ENCODE measurements at regions of chr6 and their contacts with region 1.

Region 1: GRCh38 chr6:104940881-104941728 is 15.8 kb upstream of the LIN28B start:
- DNase-seq: peak; percentile 33
- H3K4me3 ChIP-seq: peak overlapping the region; percentile 25 to 42 (median 38)
- H3K27ac ChIP-seq: no peak overlapping the region
- H3K4me1 ChIP-seq: peaks cover 4% of the 10 kb centered on the region
- H3K27me3 ChIP-seq: peaks cover 12 to 54% of the 10 kb centered on the region in 2 experiments
- CTCF ChIP-seq: peak; percentile 66 to 74
- POLR2A ChIP-seq: no peak

Region 2: DNA sequence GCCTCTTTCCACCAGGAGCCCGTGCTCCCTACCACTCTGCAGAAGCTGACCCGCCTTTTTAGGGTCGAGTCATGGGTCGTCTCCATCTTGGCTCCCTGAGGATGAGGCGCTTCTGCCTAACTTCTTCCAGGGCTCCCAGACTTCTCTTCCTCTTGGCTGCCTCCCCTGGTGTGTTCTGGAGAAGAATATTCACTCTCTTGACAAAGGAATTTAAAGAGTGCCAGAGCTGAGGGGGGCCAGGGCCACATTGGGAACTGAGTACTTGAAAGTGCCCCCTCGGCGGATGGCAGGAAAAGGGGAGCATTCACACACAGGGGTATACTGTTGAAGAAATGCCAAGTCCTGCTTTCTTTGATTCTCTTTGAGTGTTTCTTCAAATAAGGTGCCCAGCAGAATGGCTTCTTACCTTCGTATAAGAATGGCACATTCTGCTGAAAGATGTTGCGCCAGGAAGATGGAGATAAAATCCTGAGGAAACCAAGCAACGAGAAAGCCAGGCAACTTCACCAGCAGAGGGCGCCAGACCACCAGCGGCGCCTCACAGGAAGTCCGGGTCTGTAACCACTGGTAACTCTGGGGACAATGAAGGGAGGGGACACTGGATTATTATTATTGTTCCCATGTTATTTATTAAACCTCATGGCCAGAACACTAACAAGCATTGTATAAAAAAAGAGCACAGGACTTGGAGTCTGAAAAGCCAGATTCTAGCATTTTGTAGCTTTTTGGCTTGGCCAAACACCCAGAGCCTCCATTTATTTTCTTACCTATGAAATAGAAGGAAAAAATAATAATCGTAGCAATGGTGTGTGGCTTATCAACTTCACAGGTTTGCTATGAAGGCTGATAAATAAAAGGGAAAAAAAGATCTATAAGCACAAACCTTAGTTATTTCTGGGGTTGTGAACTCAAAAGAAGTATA is 258.1 kb before region 1 on chr6:
- CTCF ChIA-PET with region 1: no interaction called
- POLR2A ChIA-PET with region 1: no interaction called
- dilution Hi-C with region 1: no loop called
- intact Hi-C with region 1: loop called (anchors 2 kb)
- DNase-seq: peak; percentile 56
- H3K4me3 ChIP-seq: no peak overlapping the region
- H3K27ac ChIP-seq: peak overlapping the region; percentile 17
- H3K4me1 ChIP-seq: no peaks in the 10 kb centered on the region
- H3K27me3 ChIP-seq: no peaks in the 10 kb centered on the region
- CTCF ChIP-seq: peak; percentile 78 to 86
- POLR2A ChIP-seq: no peak

Region 3: DNA sequence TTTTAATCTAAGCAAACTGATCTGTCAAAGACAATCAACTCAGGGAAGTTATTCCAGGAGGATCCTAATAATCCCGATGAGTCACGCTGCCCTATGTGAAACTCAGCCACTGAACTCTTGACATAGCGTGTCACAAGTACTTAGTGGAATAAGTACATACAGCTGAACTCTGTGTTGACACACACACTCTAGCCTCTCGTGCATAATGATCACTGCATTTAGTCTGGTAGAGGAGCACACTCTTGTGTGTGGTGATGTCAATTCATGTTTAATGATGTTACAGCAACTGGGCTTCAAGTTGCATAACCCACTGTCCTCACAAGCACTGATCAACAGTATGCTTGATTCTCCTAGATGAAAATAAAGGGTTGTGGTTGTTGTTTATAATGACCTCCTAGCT is 229.7 kb before region 1 on chr6:
- CTCF ChIA-PET with region 1: no interaction called
- POLR2A ChIA-PET with region 1: no interaction called
- dilution Hi-C with region 1: no loop called
- intact Hi-C with region 1: no loop called
- DNase-seq: peak; percentile 35
- H3K4me3 ChIP-seq: no peak overlapping the region
- H3K27ac ChIP-seq: no peak overlapping the region
- H3K4me1 ChIP-seq: peaks cover 15% of the 10 kb centered on the region
- H3K27me3 ChIP-seq: no peaks in the 10 kb centered on the region
- CTCF ChIP-seq: no peak
- POLR2A ChIP-seq: no peak

Region 4: GRCh38 chr6:104859225-104860146 is 81.6 kb before region 1 on chr6 and contains the start of gene HACE1:
- CTCF ChIA-PET with region 1: no interaction called
- POLR2A ChIA-PET with region 1: no interaction called
- dilution Hi-C with region 1: no loop called
- intact Hi-C with region 1: loop called (anchors 5 kb)
- DNase-seq: peak; percentile 93
- H3K4me3 ChIP-seq: peak within 1 kb of the TSS; percentile 57 to 87 (median 78)
- H3K27ac ChIP-seq: peak within 1 kb of the TSS; percentile 10
- H3K4me1 ChIP-seq: peaks cover 8% of the 10 kb centered on the region
- H3K27me3 ChIP-seq: no peaks in the 10 kb centered on the region
- CTCF ChIP-seq: peak; percentile 6 to 34
- POLR2A ChIP-seq: peak; percentile 49
- total RNA-seq, gene HACE1: 12.8 and 14.8 TPM in 2 replicates